T-cell (primary cell): ENCODE measurements at regions of chr16 and their contacts with region 1.

Region 1: GRCh38 chr16:89268987-89269735 is 51.7 kb downstream of the ZNF778 start:
- DNase-seq: no peak
- ATAC-seq: no peak
- H3K4me3 ChIP-seq: no peak overlapping the region
- H3K4me3 Mint-ChIP-seq: no peak overlapping the region
- H3K27ac ChIP-seq: no peak overlapping the region
- H3K27ac Mint-ChIP-seq: no peak overlapping the region
- H3K4me1 ChIP-seq: no peaks in the 10 kb centered on the region
- H3K4me1 Mint-ChIP-seq: peaks cover 0 to 7% (median 0%) of the 10 kb centered on the region in 3 donors
- H3K27me3 ChIP-seq: no peaks in the 10 kb centered on the region
- H3K27me3 Mint-ChIP-seq: no peaks in the 10 kb centered on the region

Region 2: DNA sequence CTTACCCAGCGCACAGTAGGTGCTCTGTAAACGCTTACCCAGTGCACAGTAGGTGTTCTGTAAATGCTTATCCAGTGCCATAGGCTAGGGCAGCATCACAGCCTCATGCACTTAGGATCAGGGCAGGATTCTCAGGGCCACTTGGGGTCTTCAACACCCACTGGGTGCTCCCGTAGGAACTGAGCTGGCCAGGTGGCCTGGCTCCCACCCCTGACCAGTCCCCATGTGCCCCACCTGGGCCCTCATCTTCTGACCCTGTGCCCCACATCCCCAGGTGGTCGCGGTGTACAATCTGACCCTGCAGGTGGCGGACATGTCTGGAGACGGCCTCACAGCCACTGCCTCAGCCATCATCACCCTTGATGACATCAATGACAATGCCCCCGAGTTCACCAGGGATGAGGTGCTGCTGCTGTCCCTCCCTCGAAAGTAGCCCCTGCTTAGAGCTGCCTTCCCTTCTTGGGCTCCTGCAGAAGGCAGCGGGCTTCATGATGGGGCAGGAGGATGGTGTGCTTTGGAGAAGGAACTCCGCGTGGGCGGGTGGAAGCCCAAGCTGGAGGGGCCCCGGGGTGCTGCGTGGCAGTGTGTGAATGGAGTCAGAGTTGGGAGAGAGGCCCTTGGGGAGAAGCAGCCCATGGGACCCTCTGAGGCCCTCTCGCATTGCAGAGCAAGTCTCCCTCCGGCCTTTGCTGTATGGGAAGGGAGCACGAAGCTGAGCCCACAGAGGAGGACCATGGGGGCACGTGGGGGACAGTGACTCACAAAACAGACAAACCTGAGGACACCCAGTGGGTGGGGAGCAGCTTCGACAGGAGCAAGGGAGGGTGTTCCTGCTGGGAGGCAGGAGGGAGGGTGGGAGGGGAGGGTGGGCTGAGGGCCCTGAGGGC is 81.8 kb before region 1 on chr16:
- CTCF ChIA-PET with region 1: no interaction called
- POLR2A ChIA-PET with region 1: no interaction called
- DNase-seq: peak in 20 of 35 experiments; percentile 23 to 56 (median 33)
- ATAC-seq: peak; percentile 21 to 51 (median 34)
- H3K4me3 ChIP-seq: no peak overlapping the region
- H3K4me3 Mint-ChIP-seq: no peak overlapping the region
- H3K27ac ChIP-seq: no peak overlapping the region
- H3K27ac Mint-ChIP-seq: peak overlapping the region in 1 of 2 donors; percentile 58
- H3K4me1 ChIP-seq: peaks cover 0 to 7% of the 10 kb centered on the region in 2 experiments
- H3K4me1 Mint-ChIP-seq: peaks cover 0 to 9% (median 2%) of the 10 kb centered on the region in 3 donors
- H3K27me3 ChIP-seq: peaks cover 0 to 4% of the 10 kb centered on the region in 2 experiments
- H3K27me3 Mint-ChIP-seq: no peaks in the 10 kb centered on the region

Region 3: DNA sequence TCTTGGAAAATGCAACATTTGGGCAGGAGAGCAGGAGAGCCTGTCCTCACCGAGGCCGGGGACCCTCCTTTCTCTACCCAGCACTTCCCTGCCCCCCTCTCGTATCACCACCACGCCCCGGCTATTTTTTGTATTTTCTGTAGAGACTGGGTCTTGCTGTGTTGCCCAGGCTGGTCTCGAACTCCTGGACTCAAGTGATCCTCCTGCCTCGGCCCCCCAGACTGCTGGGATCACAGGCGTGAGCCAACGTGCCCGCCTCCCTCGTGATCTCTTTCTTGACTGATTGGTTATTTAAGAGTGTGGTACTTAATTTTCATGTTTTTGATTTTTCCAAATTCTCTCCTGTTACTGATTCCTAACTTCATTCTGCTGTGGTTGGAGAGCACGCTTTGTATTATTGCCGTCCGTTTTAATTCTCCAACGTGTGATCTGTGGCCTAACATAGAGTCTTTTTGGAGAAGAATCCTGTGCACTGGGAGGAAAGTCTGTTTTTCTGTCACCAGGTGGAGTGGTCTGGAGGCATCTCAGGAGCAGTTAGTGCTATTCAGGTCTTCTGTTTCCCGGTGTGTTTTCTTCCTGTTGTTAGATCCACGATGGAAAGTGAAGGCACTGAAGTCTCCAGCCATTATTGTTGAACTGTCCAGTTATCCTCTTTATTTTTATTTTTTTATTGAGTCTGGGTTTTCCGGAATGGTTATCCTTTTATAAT is 11.2 kb before region 1 on chr16:
- CTCF ChIA-PET with region 1: no interaction called
- POLR2A ChIA-PET with region 1: no interaction called
- DNase-seq: no peak
- ATAC-seq: no peak
- H3K4me3 ChIP-seq: peak overlapping the region in 1 of 2 donors; percentile 24
- H3K4me3 Mint-ChIP-seq: peak overlapping the region; percentile 46 to 85 (median 59)
- H3K27ac ChIP-seq: no peak overlapping the region
- H3K27ac Mint-ChIP-seq: no peak overlapping the region
- H3K4me1 ChIP-seq: peaks cover 3 to 15% of the 10 kb centered on the region in 2 experiments
- H3K4me1 Mint-ChIP-seq: peaks cover 14 to 23% (median 18%) of the 10 kb centered on the region in 3 donors
- H3K27me3 ChIP-seq: peaks cover 2 to 41% of the 10 kb centered on the region in 2 experiments
- H3K27me3 Mint-ChIP-seq: peaks cover 8 to 31% of the 10 kb centered on the region in 2 donors

Region 4: DNA sequence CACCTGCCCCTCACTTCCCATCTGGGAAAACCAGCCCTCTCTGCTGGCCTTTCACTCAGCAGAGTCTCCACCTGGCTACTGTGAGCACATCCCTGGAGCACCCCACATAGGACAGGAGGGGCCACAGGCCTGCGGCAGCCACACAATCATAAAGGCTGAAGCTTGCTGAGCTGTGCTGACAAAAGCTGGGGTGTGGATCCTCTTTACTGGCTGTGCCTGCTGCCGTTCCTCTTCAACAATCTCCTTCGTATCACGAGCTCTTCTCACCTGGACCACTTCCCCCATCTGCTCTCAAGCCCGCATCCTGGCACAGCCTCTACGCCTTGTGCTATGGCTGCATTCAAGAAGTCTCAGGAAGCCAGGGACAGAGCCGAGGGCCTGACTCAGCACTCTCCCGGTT is 34.5 kb after region 1 on chr16:
- CTCF ChIA-PET with region 1: no interaction called
- POLR2A ChIA-PET with region 1: no interaction called
- DNase-seq: peak in 2 of 35 experiments; percentile 24 to 38
- ATAC-seq: peak in 1 of 4 experiments; percentile 30
- H3K4me3 ChIP-seq: no peak overlapping the region
- H3K4me3 Mint-ChIP-seq: no peak overlapping the region
- H3K27ac ChIP-seq: peak overlapping the region; percentile 4
- H3K27ac Mint-ChIP-seq: peak overlapping the region; percentile 8 to 33
- H3K4me1 ChIP-seq: peaks cover 3 to 70% of the 10 kb centered on the region in 2 experiments
- H3K4me1 Mint-ChIP-seq: peaks cover 45 to 50% (median 49%) of the 10 kb centered on the region in 3 donors
- H3K27me3 ChIP-seq: no peaks in the 10 kb centered on the region
- H3K27me3 Mint-ChIP-seq: no peaks in the 10 kb centered on the region

Region 5: GRCh38 chr16:89407925-89408300 is 138.8 kb after region 1 on chr16:
- CTCF ChIA-PET with region 1: interaction called in 1 of 2 experiments, 11 read pairs
- POLR2A ChIA-PET with region 1: no interaction called
- DNase-seq: no peak
- ATAC-seq: no peak
- H3K4me3 ChIP-seq: no peak overlapping the region
- H3K4me3 Mint-ChIP-seq: peak overlapping the region; percentile 55 to 77 (median 59)
- H3K27ac ChIP-seq: peak overlapping the region; percentile 76
- H3K27ac Mint-ChIP-seq: peak overlapping the region; percentile 76 to 87
- H3K4me1 ChIP-seq: peaks cover 53 to 98% of the 10 kb centered on the region in 2 experiments
- H3K4me1 Mint-ChIP-seq: peaks cover 85 to 93% (median 91%) of the 10 kb centered on the region in 3 donors
- H3K27me3 ChIP-seq: no peaks in the 10 kb centered on the region
- H3K27me3 Mint-ChIP-seq: no peaks in the 10 kb centered on the region